HEK293T (cell line): ENCODE measurements at regions of chr20 and their contacts with region 1.

Region 1: DNA sequence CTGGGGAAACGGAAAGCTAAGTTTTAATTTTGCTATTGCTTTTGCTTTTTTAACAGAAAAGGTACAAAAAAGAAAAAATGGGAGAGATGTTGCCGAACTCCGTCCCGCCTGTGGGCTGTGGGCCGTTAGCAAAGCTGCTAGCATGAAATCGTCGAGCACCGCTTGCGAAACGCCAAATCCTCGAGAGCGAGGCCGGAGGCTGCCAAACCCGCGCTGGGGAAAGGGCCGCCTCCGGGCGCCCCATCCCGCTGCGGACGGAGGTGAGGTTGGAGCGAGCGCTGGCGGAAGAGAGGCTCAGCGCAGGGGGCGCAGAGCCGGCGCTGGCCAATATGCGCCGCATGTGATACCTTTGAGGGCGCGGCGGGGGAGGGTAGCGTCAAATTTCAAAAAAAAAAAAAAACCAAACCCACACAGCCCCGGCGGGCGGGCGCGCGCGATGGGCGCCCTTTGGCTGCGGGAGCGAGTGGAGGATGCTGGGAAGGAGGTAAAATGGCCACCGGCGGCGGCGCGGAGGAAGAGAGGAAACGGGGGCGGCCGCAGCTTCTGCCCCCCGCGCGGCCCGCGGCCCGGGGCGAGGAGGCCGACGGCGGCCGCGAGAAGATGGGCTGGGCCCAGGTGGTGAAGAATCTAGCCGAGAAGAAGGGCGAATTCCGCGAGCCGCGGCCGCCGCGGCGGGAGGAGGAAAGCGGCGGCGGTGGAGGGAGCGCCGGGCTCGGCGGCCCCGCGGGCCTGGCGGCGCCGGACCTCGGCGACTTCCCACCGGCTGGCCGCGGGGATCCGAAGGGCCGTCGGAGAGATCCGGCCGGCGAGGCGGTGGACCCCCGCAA is at the start of gene ZCCHC3:
- DNase-seq: peak; percentile 86

Region 2: DNA sequence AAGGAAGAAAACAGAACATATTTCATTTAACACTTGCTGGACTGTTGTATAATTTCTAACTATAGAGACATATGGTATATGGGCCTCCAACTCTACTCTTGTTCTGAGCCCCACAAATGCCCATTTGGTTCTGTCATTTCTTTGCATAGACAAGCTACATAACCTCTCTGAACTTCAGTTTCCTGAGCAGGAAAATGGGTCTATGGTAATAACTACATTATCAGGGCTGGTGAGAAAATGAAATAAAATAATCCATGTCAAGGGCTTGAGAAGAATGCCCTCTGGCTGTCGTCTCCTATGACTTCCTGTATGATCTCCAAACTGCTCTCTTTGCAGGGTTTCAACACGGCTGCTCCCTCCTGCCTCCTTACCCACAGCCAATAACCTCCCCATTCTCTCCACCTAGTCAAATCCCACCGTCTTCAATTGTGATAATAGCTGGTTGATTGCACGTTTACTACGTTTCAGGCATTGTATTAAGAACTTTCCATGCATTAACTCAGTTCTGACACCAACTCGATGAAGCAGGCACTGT is 12.1 kb after region 1 on chr20:
- CTCF ChIA-PET with region 1: interaction called, 3 read pairs
- POLR2A ChIA-PET with region 1: interaction called, 14 read pairs
- DNase-seq: no peak

Region 3: GRCh38 chr20:324177-325044 is 27.1 kb after region 1 on chr20:
- CTCF ChIA-PET with region 1: no interaction called
- POLR2A ChIA-PET with region 1: interaction called, 73 read pairs
- DNase-seq: peak; percentile 84

Region 4: GRCh38 chr20:504632-505075 is 207.3 kb after region 1 on chr20:
- CTCF ChIA-PET with region 1: no interaction called
- POLR2A ChIA-PET with region 1: no interaction called
- DNase-seq: no peak